PC-3 (cell line): ENCODE measurements at regions of chr10 and their contacts with region 1.

Region 1: DNA sequence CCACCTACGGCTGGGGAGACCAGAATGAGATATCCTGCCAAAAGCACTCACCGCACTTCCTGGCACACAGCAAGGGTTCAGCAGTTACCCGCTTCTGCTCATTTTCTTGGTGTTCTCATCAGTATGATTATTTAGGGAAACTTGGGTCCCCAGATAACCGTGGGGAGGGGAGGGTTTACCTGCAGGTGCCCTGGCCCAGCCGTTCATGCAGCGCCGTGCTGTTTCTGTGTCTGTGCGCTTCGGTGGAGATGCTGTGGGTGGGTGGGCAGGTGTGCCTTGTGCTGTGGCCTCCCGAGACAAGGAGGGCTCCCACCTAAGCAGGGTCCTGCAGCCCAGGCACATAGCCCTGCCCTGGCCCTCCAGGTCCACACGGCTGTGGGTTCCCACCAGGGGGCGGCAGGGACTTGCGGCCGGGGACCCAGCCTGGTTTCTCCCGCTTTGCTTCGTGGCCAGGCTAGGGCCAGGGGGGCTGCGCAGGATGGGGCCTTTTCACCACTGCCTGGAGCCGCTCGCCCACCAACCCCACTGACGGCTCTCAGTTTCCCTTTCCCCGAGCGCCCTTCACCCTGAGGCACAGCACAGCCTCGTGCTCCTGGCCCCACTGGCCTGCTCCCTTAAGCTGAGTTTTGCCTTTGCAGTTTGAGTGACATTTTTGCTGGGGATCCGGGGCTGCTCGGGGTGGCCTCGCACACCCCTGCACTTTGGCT is 78.5 kb downstream of the LHPP start:
- DNase-seq: peak; percentile 24
- ATAC-seq: peak; percentile 82
- H3K4me3 ChIP-seq: no peak overlapping the region
- H3K27ac ChIP-seq: no peak overlapping the region
- H3K4me1 ChIP-seq: no peaks in the 10 kb centered on the region
- H3K27me3 ChIP-seq: no peaks in the 10 kb centered on the region
- CTCF ChIP-seq: peak; percentile 57

Region 2: DNA sequence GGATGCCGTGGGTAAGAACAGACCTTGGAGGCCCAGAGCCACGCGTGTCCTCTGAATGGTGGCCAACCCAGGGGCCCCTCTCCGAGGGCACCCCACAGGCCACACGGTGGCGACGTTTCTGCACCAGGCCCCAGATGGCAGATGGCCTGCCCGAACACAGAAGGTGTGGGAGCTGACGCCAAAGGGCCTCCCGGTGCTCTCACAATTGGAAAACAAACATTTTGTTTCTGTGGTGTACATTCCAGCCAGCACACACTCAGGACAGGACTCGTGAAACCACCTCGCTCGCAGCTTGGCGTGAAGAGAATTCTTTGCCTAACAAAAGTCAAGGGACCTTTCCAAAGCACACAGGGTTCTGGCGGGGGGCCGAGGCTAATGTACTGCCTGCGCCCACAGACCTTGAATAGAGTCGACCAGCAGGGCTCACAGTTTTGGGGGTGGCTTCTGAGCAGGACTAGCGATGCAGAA is 92.0 kb after region 1 on chr10:
- CTCF ChIA-PET with region 1: no interaction called
- POLR2A ChIA-PET with region 1: no interaction called
- intact Hi-C with region 1: no loop called
- DNase-seq: no peak
- ATAC-seq: no peak
- H3K4me3 ChIP-seq: no peak overlapping the region
- H3K27ac ChIP-seq: no peak overlapping the region
- H3K4me1 ChIP-seq: peaks cover 5% of the 10 kb centered on the region
- H3K27me3 ChIP-seq: no peaks in the 10 kb centered on the region
- CTCF ChIP-seq: no peak

Region 3: GRCh38 chr10:124827474-124827873 is 287.4 kb after region 1 on chr10:
- CTCF ChIA-PET with region 1: no interaction called
- POLR2A ChIA-PET with region 1: no interaction called
- intact Hi-C with region 1: loop called (anchors 5 kb)
- DNase-seq: peak; percentile 47
- ATAC-seq: no peak
- H3K4me3 ChIP-seq: no peak overlapping the region
- H3K27ac ChIP-seq: no peak overlapping the region
- H3K4me1 ChIP-seq: no peaks in the 10 kb centered on the region
- H3K27me3 ChIP-seq: no peaks in the 10 kb centered on the region
- CTCF ChIP-seq: peak; percentile 59

Region 4: DNA sequence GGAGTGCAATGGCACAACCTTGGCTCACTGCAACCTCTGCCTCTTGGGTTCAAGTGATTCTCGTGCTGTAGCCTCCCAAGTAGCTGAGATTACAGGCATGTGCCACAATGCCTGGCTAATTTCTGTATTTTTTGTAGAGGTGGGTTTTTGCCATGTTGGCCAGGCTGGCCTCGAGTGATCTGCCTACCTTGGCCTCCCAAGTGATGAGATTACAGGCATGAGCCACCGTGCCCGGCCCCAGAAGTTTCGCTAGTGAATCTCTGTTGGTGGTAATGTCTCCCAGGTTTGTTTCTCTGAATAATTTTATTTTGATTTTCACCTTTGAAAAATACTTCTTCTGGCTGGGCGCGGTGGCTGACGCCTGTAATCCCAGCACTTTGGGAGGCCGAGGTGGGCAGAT is 320.3 kb after region 1 on chr10:
- CTCF ChIA-PET with region 1: no interaction called
- POLR2A ChIA-PET with region 1: no interaction called
- intact Hi-C with region 1: no loop called
- DNase-seq: no peak
- ATAC-seq: no peak
- H3K4me3 ChIP-seq: no peak overlapping the region
- H3K27ac ChIP-seq: no peak overlapping the region
- H3K4me1 ChIP-seq: peaks cover 20% of the 10 kb centered on the region
- H3K27me3 ChIP-seq: no peaks in the 10 kb centered on the region
- CTCF ChIP-seq: no peak